ENCODE measurements at regions of chr14 and their contacts with region 1.

Region 1: DNA sequence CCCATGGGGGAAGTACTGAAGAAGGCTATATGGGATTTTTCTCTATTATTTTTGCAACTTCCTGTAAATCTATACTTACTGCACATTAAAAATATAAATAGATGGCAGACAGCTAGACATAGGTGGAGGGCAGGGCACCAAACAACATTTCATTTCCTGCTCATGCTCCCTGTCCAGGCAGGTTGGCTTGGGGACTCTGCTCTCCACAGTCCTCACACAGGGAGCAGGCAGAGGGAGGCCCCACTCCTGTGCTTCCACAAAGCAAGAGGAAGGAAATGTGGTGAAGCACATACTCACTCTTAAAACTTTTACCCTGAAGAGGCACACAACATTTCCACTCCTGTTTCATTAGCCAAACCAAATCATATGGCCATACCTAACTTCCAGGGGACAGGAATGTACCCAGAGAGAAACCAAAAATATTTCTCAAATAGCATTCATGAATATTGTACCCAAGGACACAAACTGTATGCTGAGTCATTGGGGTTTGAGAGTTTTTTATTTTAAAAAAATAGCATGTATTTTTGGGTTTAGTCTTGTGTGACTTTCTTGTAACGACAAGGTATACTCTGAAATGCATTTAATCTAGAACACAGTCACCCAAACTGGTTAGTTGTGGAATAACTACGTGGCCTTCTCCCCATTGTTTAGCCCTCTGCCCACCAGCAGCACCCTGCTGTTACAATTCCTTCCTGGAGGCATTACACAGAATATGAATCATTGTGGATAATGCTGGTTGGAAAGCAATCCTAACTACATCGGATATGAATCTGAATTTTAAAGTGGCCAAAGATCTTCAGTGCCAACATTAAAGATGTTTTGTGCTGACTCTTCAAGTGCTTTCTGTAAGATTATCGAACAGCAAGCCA is 40.9 kb downstream of the RTN1 start:
- H3K4me3 Mint-ChIP-seq: no peak overlapping the region
- H3K27ac Mint-ChIP-seq: peak overlapping the region; percentile 59
- H3K4me1 Mint-ChIP-seq: peaks cover 32% of the 10 kb centered on the region
- H3K27me3 Mint-ChIP-seq: no peaks in the 10 kb centered on the region

Region 2: DNA sequence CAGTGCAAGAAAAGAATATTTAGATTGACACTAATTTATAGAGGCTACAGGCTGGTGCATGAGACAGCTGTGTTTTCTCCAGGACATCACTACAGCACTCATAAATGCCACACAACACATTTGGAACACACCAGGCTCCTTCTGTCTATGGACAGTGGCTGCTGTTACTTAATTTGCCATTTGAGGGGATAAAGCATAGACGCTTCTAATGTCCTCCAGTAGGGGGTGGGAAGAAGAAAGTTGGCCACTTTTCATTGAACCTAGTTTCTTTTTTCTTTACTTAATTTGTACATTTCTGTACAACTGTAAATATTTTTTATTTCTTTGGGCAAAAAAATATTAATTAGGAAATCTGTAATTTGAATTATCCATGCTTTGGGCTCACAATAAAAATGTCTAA is 53.3 kb after region 1 on chr14:
- intact Hi-C with region 1: loop called (anchors 10 kb)
- H3K4me3 Mint-ChIP-seq: no peak overlapping the region
- H3K27ac Mint-ChIP-seq: no peak overlapping the region
- H3K4me1 Mint-ChIP-seq: no peaks in the 10 kb centered on the region
- H3K27me3 Mint-ChIP-seq: peaks cover 11% of the 10 kb centered on the region

Measured in dendritic cell treated with granulocyte-macrophage colony-stimulating factor and Interleukin-4, amounts not matched to agents 40 ng/mL and 50 ng/mL, for 4 days (primary cell).